ENCODE measurements at regions of chr13 and their contacts with region 1.

Region 1: DNA sequence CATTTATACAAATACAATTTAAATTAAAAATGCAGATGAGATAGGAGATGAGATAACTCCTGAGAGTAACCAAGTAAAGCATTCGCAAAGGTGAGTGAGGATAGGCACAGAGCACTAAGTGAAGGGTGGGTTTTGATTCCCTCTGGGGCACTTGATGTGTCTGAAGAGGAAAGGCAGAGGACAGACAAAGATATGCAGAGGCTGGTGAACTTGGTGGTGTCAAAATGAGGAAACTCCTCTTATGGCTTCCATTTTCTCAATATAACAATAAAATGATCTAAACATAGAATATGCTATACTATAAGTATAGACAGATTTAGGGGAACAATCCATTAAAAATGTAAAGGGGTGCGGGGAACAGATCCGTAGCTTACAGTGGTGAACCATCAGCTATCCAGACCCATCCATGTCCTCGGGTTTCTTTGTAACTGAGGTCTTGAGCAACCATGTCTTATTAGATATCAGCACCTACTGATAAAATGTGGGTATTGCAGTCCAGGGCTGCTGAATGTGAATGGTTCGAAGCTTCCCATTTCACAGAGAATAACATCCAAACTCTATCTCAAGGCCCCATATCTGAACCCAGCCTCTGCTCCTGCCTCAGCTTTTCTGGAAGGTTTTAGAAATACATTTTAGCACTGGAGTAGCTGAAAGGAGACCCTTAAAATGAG is 73.9 kb upstream of the SLC10A2 start:
- DNase-seq: peak; percentile 32

Region 2: DNA sequence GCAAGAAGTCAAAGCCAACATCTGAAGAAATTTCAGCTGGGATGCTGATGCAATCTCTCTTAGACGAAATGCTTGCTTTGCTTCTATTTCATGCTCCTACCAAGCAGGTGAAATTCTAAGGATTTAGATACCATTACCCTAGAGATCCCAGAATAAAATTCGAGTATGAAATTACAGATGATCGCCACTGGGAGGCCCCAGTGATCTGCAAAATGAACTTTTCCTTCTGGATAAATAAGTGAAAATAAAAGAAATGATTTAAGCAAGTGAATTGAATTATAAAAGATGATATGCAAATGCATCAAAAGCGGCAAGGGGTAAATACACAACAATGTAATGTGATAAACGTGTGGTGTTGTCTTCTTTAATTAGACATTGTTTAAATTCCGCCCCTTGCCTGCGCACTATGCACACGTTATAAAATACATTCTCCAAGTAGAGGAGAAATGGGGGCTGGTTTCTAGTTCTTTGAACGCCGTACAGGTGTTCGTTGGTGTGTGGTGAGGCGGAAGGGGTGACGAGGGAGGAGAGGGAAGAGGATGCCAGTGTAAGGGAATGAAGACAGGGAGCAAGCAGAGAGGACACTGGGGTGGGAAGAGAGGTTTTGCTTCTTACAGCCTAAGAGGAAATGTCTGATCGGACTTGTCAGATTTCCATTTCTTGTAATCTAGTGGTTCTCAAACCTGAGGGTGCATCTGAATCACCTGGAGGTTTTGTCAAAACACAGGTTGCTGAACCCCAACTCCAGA is 236.3 kb before region 1 on chr13:
- in situ Hi-C with region 1: loop called (anchors 25 kb)
- DNase-seq: peak; percentile 33

Region 3: GRCh38 chr13:103291798-103292572 is 151.8 kb after region 1 on chr13:
- in situ Hi-C with region 1: no loop called
- DNase-seq: no peak

Region 4: DNA sequence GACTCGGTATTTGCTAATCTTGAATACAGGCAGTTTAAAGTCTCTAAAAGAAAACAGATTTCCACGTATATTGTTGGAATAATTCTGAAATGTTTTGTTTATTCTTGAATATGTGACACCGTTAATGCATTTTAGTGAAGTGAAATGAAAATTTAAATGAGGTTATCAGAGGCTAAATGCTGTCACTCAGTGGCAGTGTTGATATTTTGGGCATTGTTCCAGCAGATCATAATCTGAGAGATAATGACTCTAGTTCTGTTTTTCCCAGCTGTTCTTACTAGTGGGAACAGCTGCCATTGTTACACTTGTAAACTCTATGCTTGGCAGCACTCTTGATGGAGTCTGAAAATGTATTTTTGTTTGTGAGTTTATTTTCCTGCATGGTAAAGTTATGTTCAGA is 291.7 kb after region 1 on chr13:
- in situ Hi-C with region 1: no loop called
- DNase-seq: peak; percentile 3

Region 5: DNA sequence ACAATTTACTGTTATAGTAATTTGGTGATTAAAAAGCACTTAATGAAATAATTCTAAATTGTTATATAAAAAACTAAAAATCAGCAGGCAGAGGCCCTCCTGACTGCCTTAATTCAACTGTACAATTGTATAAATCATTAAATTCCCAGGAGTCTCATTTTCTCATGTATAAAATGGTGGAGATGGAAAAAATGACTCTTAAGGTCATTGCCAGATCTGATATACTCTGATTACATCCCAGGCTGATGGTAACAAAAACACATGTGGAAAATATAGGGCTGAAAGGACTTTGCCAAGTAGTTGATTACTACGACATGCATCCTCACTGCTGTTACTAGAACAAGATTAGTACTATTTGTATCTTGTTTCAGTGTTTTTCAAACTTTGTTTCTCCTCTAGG is 946.1 kb after region 1 on chr13:
- in situ Hi-C with region 1: no loop called
- DNase-seq: no peak